ENCODE measurements at regions of chr11 and their contacts with region 1.

Region 1: GRCh38 chr11:66677599-66678375 is at the start of gene RBM4B:
- DNase-seq: peak; percentile 95
- ATAC-seq: peak; percentile 91
- H3K4me3 Mint-ChIP-seq: peak within 1 kb of the TSS; percentile 97
- H3K27ac Mint-ChIP-seq: peak within 1 kb of the TSS; percentile 98
- H3K4me1 Mint-ChIP-seq: peaks cover 38% of the 10 kb centered on the region
- H3K27me3 Mint-ChIP-seq: no peaks in the 10 kb centered on the region
- CTCF ChIP-seq: no peak
- total RNA-seq, gene RBM4B: 30.8 and 34.4 TPM in 2 replicates

Region 2: DNA sequence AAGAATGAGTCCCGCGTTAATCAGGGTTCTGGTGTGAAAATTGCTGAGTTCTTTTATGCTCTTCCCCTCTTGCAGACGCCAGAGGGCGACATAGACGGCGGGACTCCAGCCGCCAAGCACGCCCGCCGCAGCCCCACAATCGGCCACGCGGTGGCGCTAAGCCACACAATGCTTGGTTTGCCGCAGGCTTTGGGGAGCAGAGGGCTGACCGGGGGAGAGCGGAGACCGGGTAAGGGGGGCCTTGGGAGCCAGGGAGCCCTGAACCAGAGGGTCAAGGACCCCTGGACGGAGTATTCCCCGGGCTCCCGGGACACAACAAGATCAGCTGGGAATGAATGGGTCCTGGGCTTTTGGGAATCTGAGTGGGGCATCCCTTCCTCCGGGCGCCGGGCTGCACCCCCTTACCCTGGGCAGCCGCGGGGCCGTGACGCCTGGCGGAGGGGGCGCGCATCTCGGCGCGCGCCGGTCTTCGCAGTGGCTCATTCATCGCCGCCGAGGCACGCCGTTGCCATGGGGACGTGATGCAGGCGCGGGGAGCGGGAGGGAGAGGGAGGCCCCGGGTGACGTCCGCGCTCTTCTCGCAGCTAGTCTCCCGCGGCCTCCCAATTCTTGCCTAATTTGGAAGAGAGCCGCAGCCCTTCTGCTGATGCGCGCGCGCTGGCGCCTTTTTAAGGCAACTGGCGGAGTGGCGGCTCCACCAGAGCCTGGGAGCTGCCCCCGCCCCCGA is 269.1 kb before region 1 on chr11:
- CTCF ChIA-PET with region 1: interaction called, 22 read pairs
- POLR2A ChIA-PET with region 1: no interaction called
- intact Hi-C with region 1: loop called (anchors 1 kb)
- DNase-seq: peak; percentile 88
- ATAC-seq: peak; percentile 92
- H3K4me3 Mint-ChIP-seq: peak overlapping the region; percentile 73
- H3K27ac Mint-ChIP-seq: no peak overlapping the region
- H3K4me1 Mint-ChIP-seq: peaks cover 4% of the 10 kb centered on the region
- H3K27me3 Mint-ChIP-seq: peaks cover 44% of the 10 kb centered on the region
- CTCF ChIP-seq: peak; percentile 96

Region 3: GRCh38 chr11:66510271-66510989 is 167.4 kb before region 1 on chr11 and contains the start of gene BBS1:
- CTCF ChIA-PET with region 1: interaction called, 3 read pairs
- POLR2A ChIA-PET with region 1: interaction called, 5 read pairs
- intact Hi-C with region 1: loop called (anchors 1 kb)
- DNase-seq: peak; percentile 82
- ATAC-seq: peak; percentile 98
- H3K4me3 Mint-ChIP-seq: peak within 1 kb of the TSS; percentile 91
- H3K27ac Mint-ChIP-seq: peak within 1 kb of the TSS; percentile 42
- H3K4me1 Mint-ChIP-seq: peaks cover 14% of the 10 kb centered on the region
- H3K27me3 Mint-ChIP-seq: no peaks in the 10 kb centered on the region
- CTCF ChIP-seq: no peak
- total RNA-seq, gene BBS1: 30.5 and 38.8 TPM in 2 replicates

Region 4: GRCh38 chr11:66592457-66593302 is 85.1 kb before region 1 on chr11 and contains the starts of genes CCDC87 and CCS:
- CTCF ChIA-PET with region 1: interaction called, 18 read pairs
- POLR2A ChIA-PET with region 1: interaction called, 20 read pairs
- intact Hi-C with region 1: loop called (anchors 1 kb)
- DNase-seq: peak; percentile 98
- ATAC-seq: peak; percentile 97
- H3K4me3 Mint-ChIP-seq: peak within 1 kb of the TSS; percentile 100
- H3K27ac Mint-ChIP-seq: peak within 1 kb of the TSS; percentile 99
- H3K4me1 Mint-ChIP-seq: peaks cover 36% of the 10 kb centered on the region
- H3K27me3 Mint-ChIP-seq: no peaks in the 10 kb centered on the region
- CTCF ChIP-seq: no peak
- total RNA-seq, gene CCDC87: 0.22 and 0.31 TPM in 2 replicates
- total RNA-seq, gene CCS: 59.0 and 65.3 TPM in 2 replicates

Region 5: GRCh38 chr11:66638177-66639065 is 39.4 kb before region 1 on chr11 and contains the start of gene RBM4:
- CTCF ChIA-PET with region 1: interaction called, 29 read pairs
- POLR2A ChIA-PET with region 1: interaction called, 81 read pairs
- intact Hi-C with region 1: loop called (anchors 1 kb)
- DNase-seq: peak; percentile 78
- ATAC-seq: peak; percentile 95
- H3K4me3 Mint-ChIP-seq: peak within 1 kb of the TSS; percentile 99
- H3K27ac Mint-ChIP-seq: peak within 1 kb of the TSS; percentile 98
- H3K4me1 Mint-ChIP-seq: peaks cover 67% of the 10 kb centered on the region
- H3K27me3 Mint-ChIP-seq: no peaks in the 10 kb centered on the region
- CTCF ChIP-seq: no peak
- total RNA-seq, gene RBM4: 197 and 202 TPM in 2 replicates

Region 6: DNA sequence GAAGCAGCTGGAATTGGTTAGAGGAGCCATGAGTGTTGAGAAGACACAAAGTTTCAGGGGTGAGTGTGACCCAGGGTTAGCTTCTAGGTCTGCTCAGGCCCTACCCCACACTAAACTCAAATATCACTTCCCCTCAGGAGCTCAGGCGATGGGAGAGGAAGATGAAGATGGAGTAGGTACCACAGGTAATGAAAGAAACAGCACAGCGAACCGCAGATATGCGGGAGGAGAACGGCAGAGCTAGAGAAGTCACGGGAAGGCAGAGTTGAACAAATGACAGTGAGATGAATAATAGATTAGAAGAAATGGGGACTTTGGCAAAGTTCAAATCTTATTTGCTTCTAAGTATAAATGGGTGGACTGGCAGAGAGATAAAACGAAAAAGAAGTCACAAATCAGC is 48.7 kb after region 1 on chr11:
- CTCF ChIA-PET with region 1: no interaction called
- POLR2A ChIA-PET with region 1: no interaction called
- intact Hi-C with region 1: no loop called
- DNase-seq: no peak
- ATAC-seq: no peak
- H3K4me3 Mint-ChIP-seq: peak overlapping the region; percentile 78
- H3K27ac Mint-ChIP-seq: no peak overlapping the region
- H3K4me1 Mint-ChIP-seq: peaks cover 18% of the 10 kb centered on the region
- H3K27me3 Mint-ChIP-seq: peaks cover 31% of the 10 kb centered on the region
- CTCF ChIP-seq: no peak

Region 7: DNA sequence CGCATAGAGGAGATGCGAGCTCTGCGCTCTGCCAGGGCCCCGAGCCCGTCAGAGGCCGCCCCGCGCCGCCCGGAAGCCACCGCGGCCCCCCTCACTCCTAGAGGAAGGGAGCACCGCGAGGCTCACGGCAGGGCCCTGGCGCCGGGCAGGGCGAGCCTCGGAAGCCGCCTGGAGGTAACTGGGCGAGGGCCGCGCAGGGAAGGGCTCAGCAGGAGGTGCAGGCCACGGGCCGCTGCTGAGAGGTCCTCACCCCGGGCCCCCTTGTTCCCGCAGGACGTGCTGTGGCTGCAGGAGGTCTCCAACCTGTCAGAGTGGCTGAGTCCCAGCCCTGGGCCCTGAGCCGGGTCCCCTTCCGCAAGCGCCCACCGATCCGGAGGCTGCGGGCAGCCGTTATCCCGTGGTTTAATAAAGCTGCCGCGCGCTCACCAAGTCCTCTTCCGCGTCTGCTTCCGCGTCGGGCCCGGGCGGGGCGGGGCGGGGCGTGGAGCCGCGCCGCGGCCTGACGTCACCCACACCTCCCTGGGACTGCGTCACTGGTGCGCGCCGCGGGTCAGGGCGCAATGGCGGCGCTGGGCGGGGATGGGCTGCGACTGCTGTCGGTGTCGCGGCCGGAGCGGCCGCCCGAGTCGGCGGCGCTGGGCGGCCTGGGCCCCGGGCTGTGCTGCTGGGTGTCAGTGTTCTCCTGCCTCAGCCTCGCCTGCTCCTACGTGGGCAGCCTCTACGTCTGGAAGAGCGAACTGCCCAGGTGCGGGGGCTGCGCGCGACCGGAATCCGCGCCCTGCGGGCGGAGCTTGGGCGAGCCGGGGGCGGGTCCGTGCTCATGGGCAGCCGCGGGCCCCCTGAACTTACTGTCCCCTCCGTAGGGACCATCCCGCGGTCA is 165.3 kb after region 1 on chr11 and contains the start of gene RCE1:
- CTCF ChIA-PET with region 1: no interaction called
- POLR2A ChIA-PET with region 1: interaction called, 21 read pairs
- intact Hi-C with region 1: no loop called
- DNase-seq: peak; percentile 93
- ATAC-seq: peak; percentile 91
- H3K4me3 Mint-ChIP-seq: peak within 1 kb of the TSS; percentile 92
- H3K27ac Mint-ChIP-seq: peak within 1 kb of the TSS; percentile 90
- H3K4me1 Mint-ChIP-seq: peaks cover 45% of the 10 kb centered on the region
- H3K27me3 Mint-ChIP-seq: no peaks in the 10 kb centered on the region
- CTCF ChIP-seq: no peak
- total RNA-seq, gene RCE1: 20.1 and 21.4 TPM in 2 replicates

Measured in activated B cell treated with CpG ODN at 0.5 μM for 24 hours (primary cell).